ENCODE measurements at regions of chr16 and their contacts with region 1.

Region 1: GRCh38 chr16:85821441-85822135 is 22.1 kb downstream of the COX4I1 start:
- DNase-seq: peak; percentile 81 to 97 (median 85)
- H3K4me3 ChIP-seq: no peak overlapping the region
- H3K4me3 Mint-ChIP-seq: no peak overlapping the region
- H3K27ac ChIP-seq: no peak overlapping the region
- H3K27ac Mint-ChIP-seq: peak overlapping the region in 3 of 7 donors; percentile 3 to 76 (median 74)
- H3K4me1 ChIP-seq: peaks cover 18 to 22% of the 10 kb centered on the region in 2 donors
- H3K4me1 Mint-ChIP-seq: peaks cover 28% of the 10 kb centered on the region
- H3K27me3 ChIP-seq: peaks cover 0 to 2% of the 10 kb centered on the region in 2 donors
- H3K27me3 Mint-ChIP-seq: peaks cover 3 to 8% (median 3%) of the 10 kb centered on the region in 3 donors
- CTCF ChIP-seq: peak; percentile 99

Region 2: GRCh38 chr16:86016201-86016871 is 194.7 kb after region 1 on chr16:
- intact Hi-C with region 1: loop called (anchors 1 to 2 kb)
- DNase-seq: peak; percentile 54 to 74 (median 70)
- H3K4me3 ChIP-seq: no peak overlapping the region
- H3K4me3 Mint-ChIP-seq: peak overlapping the region in 1 of 2 donors; percentile 43
- H3K27ac ChIP-seq: no peak overlapping the region
- H3K27ac Mint-ChIP-seq: peak overlapping the region in 4 of 7 donors; percentile 20 to 72 (median 54)
- H3K4me1 ChIP-seq: peaks cover 17 to 19% of the 10 kb centered on the region in 2 donors
- H3K4me1 Mint-ChIP-seq: peaks cover 25% of the 10 kb centered on the region
- H3K27me3 ChIP-seq: no peaks in the 10 kb centered on the region
- H3K27me3 Mint-ChIP-seq: peaks cover 9 to 24% (median 12%) of the 10 kb centered on the region in 3 donors
- CTCF ChIP-seq: peak; percentile 90

Region 3: GRCh38 chr16:86519649-86520316 is 698.2 kb after region 1 on chr16:
- intact Hi-C with region 1: loop called in 1 of 2 experiments (anchors 5 kb)
- DNase-seq: peak; percentile 12 to 70 (median 53)
- H3K4me3 ChIP-seq: no peak overlapping the region
- H3K4me3 Mint-ChIP-seq: no peak overlapping the region
- H3K27ac ChIP-seq: no peak overlapping the region
- H3K27ac Mint-ChIP-seq: no peak overlapping the region
- H3K4me1 ChIP-seq: no peaks in the 10 kb centered on the region
- H3K4me1 Mint-ChIP-seq: peaks cover 4% of the 10 kb centered on the region
- H3K27me3 ChIP-seq: peaks cover 22 to 55% of the 10 kb centered on the region in 2 donors
- H3K27me3 Mint-ChIP-seq: peaks cover 55 to 79% (median 62%) of the 10 kb centered on the region in 3 donors
- CTCF ChIP-seq: peak; percentile 96